ENCODE measurements at regions of chr12 and their contacts with region 1.

Region 1: GRCh38 chr12:6167327-6168259 is 32.6 kb upstream of the CD9 start:
- DNase-seq: peak; percentile 84
- H3K4me3 Mint-ChIP-seq: peak overlapping the region; percentile 28
- H3K27ac Mint-ChIP-seq: peak overlapping the region; percentile 87
- H3K4me1 Mint-ChIP-seq: peaks cover 24% of the 10 kb centered on the region
- H3K27me3 Mint-ChIP-seq: peaks cover 1% of the 10 kb centered on the region

Region 2: GRCh38 chr12:6062757-6063735 is 104.5 kb before region 1 on chr12:
- CTCF ChIA-PET with region 1: no interaction called
- POLR2A ChIA-PET with region 1: no interaction called
- intact Hi-C with region 1: loop called (anchors 5 kb)
- DNase-seq: peak; percentile 66
- H3K4me3 Mint-ChIP-seq: no peak overlapping the region
- H3K27ac Mint-ChIP-seq: no peak overlapping the region
- H3K4me1 Mint-ChIP-seq: no peaks in the 10 kb centered on the region
- H3K27me3 Mint-ChIP-seq: peaks cover under 1% of the 10 kb centered on the region

Region 3: GRCh38 chr12:6140651-6141447 is 26.7 kb before region 1 on chr12:
- CTCF ChIA-PET with region 1: interaction called, 3 read pairs
- POLR2A ChIA-PET with region 1: interaction called, 4 read pairs
- intact Hi-C with region 1: loop called (anchors 2 kb)
- DNase-seq: peak; percentile 57
- H3K4me3 Mint-ChIP-seq: no peak overlapping the region
- H3K27ac Mint-ChIP-seq: peak overlapping the region; percentile 81
- H3K4me1 Mint-ChIP-seq: peaks cover 36% of the 10 kb centered on the region
- H3K27me3 Mint-ChIP-seq: no peaks in the 10 kb centered on the region

Region 4: DNA sequence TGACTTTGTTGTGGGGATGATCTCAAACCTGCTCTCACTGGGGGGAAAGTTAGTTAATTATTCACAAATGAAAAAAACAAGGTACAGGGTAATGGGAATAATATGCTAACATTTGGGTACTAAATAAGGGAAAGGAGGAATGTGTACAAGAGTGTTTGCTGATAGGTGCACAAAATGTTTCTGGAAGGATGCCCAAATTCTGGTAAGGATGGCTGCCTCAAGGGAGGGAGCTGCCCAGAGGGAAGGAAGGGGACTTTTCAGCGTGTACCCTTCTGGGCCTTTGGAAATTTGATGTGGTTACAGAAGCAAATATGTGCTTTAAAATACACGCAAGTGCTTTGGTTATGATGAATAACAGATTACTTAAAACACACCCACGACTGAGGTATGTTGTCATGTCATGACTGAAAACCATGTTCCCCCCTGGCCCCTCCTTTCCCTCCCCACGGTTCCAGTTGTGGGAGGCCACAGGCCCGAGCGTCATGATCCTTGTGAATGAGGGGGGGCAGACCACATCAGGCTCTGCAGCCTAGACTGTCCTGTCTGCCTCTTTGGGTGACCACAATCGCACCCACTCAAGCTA is 99.6 kb after region 1 on chr12:
- CTCF ChIA-PET with region 1: no interaction called
- POLR2A ChIA-PET with region 1: no interaction called
- intact Hi-C with region 1: loop called (anchors 1 kb)
- DNase-seq: peak; percentile 87
- H3K4me3 Mint-ChIP-seq: no peak overlapping the region
- H3K27ac Mint-ChIP-seq: peak overlapping the region; percentile 26
- H3K4me1 Mint-ChIP-seq: peaks cover 16% of the 10 kb centered on the region
- H3K27me3 Mint-ChIP-seq: peaks cover 7% of the 10 kb centered on the region